Gastrocnemius medialis (tissue), 4 donors: ENCODE measurements at regions of chr5 and their contacts with region 1.

Region 1: GRCh38 chr5:131810510-131811249 is 13.9 kb upstream of the FNIP1 start:
- DNase-seq: no peak
- ATAC-seq: peak; percentile 93 to 95
- H3K4me3 ChIP-seq: no peak overlapping the region
- H3K27ac ChIP-seq: peak overlapping the region; percentile 59 to 80 (median 70)
- H3K4me1 ChIP-seq: peaks cover 29 to 37% of the 10 kb centered on the region in 2 donors
- H3K27me3 ChIP-seq: no peaks in the 10 kb centered on the region
- CTCF ChIP-seq: peak in 4 of 5 experiments; percentile 39 to 50 (median 42)
- POLR2A ChIP-seq: no peak

Region 2: DNA sequence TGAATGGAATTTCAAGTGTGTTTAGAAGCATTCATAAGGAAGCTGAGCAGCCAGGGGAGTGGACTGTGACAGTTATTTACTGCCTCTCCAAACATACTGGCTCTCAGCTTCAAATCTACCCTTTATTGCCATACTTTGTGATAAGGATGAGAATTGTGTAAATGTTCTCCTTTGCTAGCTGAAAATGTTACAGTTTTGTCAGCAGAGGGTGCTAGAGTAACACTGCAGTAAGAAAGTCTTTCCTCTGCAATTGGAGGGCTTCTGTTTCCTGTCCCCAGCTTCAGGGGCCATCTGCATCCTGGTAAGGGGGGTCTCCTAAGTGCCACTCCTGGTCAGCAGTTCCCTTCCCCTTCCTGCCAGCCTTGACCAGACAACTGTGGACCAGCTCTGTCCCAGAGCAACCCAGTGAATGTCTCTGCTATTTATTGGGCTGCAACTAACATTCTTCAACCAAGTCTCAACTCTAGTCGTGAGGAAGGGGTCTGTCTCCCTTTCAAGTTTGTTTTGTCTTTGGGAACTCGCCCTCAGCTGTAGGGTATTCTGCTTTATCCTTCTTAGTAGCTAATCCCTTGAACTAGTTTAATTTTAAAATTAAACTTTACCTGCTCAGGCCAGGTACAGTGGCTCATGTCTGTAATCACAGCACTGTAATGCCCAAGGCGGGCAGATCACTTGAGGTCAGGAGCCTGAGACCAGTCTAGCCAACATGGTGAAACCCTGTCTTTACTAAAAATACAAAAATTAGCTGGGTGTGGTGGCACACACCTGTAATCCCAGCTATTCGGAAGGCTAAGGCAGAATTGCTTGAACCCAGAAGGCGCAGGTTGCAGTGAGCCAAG is 221.0 kb before region 1 on chr5:
- in situ Hi-C with region 1: no loop called
- intact Hi-C with region 1: loop called (anchors 2 kb)
- DNase-seq: no peak
- ATAC-seq: peak; percentile 45 to 61
- H3K4me3 ChIP-seq: no peak overlapping the region
- H3K27ac ChIP-seq: no peak overlapping the region
- H3K4me1 ChIP-seq: peaks cover 6 to 18% of the 10 kb centered on the region in 2 donors
- H3K27me3 ChIP-seq: no peaks in the 10 kb centered on the region
- CTCF ChIP-seq: peak; percentile 77 to 91 (median 84)
- POLR2A ChIP-seq: no peak

Region 3: GRCh38 chr5:131974956-131975726 is 164.5 kb after region 1 on chr5:
- in situ Hi-C with region 1: no loop called
- intact Hi-C with region 1: no loop called
- DNase-seq: no peak
- ATAC-seq: no peak
- H3K4me3 ChIP-seq: no peak overlapping the region
- H3K27ac ChIP-seq: no peak overlapping the region
- H3K4me1 ChIP-seq: no peaks in the 10 kb centered on the region
- H3K27me3 ChIP-seq: no peaks in the 10 kb centered on the region
- CTCF ChIP-seq: no peak
- POLR2A ChIP-seq: no peak

Region 4: DNA sequence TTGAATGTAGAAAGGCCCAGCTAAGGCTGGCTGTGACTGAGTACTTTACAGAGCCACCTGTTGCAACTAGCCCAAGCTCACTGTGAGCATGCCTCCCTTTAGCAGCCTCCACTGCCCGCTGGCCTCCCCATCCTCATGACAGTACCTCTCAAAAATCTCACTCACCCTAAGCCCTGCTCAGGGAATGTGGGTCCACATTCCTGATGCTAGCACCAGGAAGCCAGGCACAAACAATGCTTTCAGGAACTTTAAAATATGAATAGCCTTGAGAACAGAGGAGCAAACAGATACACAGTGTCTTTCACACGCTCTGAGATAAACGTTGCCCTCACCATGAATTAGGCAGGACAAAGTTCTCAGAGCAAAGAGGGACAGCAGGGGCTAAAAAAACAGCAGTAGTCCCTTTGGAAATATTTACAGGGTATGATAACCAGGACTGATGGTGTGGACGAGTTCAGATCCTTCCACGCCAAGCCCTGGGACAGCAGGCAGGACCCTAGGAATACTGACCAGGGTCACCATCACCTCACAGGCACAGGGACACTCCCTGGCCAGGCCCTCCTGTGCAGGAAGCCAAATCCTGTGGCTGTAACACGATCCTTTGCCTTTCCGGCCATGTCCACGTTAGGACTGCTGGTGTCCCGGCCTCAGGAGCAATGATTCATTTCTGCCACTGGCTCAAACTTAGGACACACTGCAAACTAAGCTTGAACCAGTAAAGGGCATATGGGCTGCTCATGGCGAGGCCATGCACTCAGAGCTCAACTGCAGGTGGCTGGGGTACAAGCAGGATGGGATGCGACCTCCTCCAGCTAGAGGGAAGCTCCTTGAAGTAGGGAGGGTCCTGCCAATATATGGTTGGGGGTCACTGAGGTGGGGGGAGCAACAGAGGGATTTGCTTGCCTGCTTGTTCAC is 191.2 kb after region 1 on chr5:
- in situ Hi-C with region 1: loop called (anchors 5 to 10 kb)
- intact Hi-C with region 1: loop called (anchors 1 kb)
- DNase-seq: peak; percentile 78 to 88
- ATAC-seq: peak; percentile 94
- H3K4me3 ChIP-seq: no peak overlapping the region
- H3K27ac ChIP-seq: peak overlapping the region; percentile 81 to 91 (median 84)
- H3K4me1 ChIP-seq: peaks cover 16 to 38% of the 10 kb centered on the region in 2 donors
- H3K27me3 ChIP-seq: no peaks in the 10 kb centered on the region
- CTCF ChIP-seq: no peak
- POLR2A ChIP-seq: no peak

Region 5: GRCh38 chr5:132064738-132065331 is 254.2 kb after region 1 on chr5:
- in situ Hi-C with region 1: no loop called
- intact Hi-C with region 1: loop called (anchors 5 kb)
- DNase-seq: peak in 1 of 2 donors; percentile 36
- ATAC-seq: peak in 1 of 2 donors; percentile 64
- H3K4me3 ChIP-seq: no peak overlapping the region
- H3K27ac ChIP-seq: no peak overlapping the region
- H3K4me1 ChIP-seq: no peaks in the 10 kb centered on the region
- H3K27me3 ChIP-seq: no peaks in the 10 kb centered on the region
- CTCF ChIP-seq: peak; percentile 47 to 90 (median 81)
- POLR2A ChIP-seq: no peak